Cardiac septum (tissue), 1 donor: ENCODE measurements at regions of chr9 and their contacts with region 1.

Region 1: GRCh38 chr9:26955921-26956859 is at the start of gene IFT74:
- DNase-seq: peak; percentile 98
- total RNA-seq, gene IFT74: 8.7 TPM

Region 2: DNA sequence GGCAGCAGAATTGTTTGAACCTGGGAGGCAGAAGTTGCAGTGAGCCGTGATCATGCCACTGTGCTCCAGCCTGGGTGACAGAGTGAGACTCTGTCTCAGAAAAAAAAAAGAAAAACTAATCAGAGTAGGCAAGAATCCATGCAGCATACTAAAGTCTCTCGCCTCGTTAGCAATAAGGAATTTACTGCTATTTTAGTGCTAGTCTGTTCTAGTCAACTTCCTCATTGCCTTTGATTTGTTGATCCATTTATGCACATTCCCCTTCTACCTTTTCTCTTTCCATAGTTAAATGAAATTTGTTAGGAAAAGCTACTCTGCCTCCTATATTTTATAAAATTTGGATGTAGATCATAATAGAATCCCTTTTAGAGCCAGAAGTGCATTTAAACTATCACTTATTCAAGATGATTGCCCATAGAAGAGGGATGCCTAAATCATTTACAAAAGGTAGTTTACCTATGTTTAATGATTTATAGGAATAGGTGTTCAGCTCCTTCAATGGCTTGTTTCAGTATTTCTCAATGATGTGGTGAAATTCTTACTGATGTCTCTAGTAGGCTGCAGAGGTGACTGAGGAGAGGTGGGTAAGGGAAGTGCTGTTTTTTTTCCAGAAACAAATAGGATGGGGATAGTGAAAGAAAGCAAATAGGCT is 47.4 kb after region 1 on chr9:
- intact Hi-C with region 1: no loop called
- DNase-seq: no peak

Region 3: GRCh38 chr9:27573634-27574590 is 617.7 kb after region 1 on chr9:
- intact Hi-C with region 1: loop called (anchors 5 kb)
- DNase-seq: peak; percentile 97